Aorta (tissue), 5 donors: ENCODE measurements at regions of chr2 and their contacts with region 1.

Region 1: GRCh38 chr2:30366199-30366691 is 80.8 kb upstream of the LCLAT1 start:
- DNase-seq: no peak
- ATAC-seq: no peak
- H3K4me3 ChIP-seq: no peak overlapping the region
- H3K27ac ChIP-seq: no peak overlapping the region
- H3K4me1 ChIP-seq: peaks cover 5 to 7% of the 10 kb centered on the region in 2 donors
- H3K27me3 ChIP-seq: no peaks in the 10 kb centered on the region

Region 2: GRCh38 chr2:30321466-30321865 is 44.8 kb before region 1 on chr2:
- intact Hi-C with region 1: no loop called
- DNase-seq: no peak
- ATAC-seq: no peak
- H3K4me3 ChIP-seq: no peak overlapping the region
- H3K27ac ChIP-seq: no peak overlapping the region
- H3K4me1 ChIP-seq: no peaks in the 10 kb centered on the region
- H3K27me3 ChIP-seq: no peaks in the 10 kb centered on the region

Region 3: GRCh38 chr2:30421604-30422443 is 55.6 kb after region 1 on chr2:
- intact Hi-C with region 1: loop called in 1 of 2 experiments (anchors 5 kb)
- DNase-seq: no peak
- ATAC-seq: peak; percentile 64
- H3K4me3 ChIP-seq: no peak overlapping the region
- H3K27ac ChIP-seq: peak overlapping the region; percentile 68
- H3K4me1 ChIP-seq: peaks cover 0 to 2% of the 10 kb centered on the region in 2 donors
- H3K27me3 ChIP-seq: no peaks in the 10 kb centered on the region

Region 4: DNA sequence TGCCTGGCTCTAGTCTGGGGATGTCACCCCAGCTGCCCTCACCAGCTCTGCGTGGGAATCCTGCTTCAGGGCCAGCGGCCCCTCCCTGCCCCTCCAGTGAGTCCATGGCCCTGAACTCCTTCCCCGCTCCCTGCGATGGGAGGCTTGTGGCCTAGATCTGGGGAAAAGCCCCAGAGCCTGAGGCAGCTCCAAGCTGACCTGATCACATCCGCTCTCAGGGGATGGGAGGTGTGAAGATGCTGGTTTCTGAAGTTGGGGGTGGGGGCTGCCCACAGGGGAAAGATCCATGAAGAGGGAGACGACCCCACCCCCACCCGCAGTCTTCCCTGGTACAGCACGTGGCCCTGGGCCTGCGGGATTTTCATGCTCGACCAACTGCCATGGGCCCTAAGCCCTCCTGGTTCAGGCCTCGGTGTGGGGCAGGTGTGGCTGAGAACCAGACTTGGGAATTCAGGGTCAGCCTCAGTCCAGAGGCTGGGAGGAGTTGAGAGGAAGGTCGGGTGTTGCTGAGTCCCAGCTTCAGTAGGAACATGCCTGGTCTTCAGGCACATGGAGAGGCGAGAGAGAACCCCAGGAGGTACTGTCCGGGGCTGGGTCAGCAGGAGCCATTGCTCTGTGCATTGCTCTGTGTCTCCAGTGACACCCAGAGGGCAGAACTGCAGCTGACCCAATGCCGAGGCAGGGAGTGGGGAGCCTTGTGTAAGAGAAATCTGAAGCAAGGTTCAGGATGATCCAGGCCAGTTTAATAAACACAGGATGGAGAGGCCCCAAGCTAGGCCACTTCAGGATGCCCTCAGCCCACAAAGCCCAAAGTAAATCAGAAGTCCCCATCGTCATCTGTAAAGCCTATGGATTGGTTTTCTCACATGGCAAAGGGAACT is 325.9 kb after region 1 on chr2:
- intact Hi-C with region 1: loop called in 1 of 2 experiments (anchors 10 kb)
- DNase-seq: no peak
- ATAC-seq: no peak
- H3K4me3 ChIP-seq: no peak overlapping the region
- H3K27ac ChIP-seq: peak overlapping the region; percentile 31 to 79
- H3K4me1 ChIP-seq: peaks cover 0 to 6% of the 10 kb centered on the region in 2 donors
- H3K27me3 ChIP-seq: no peaks in the 10 kb centered on the region